ENCODE measurements at regions of chr1 and their contacts with region 1.

Region 1: DNA sequence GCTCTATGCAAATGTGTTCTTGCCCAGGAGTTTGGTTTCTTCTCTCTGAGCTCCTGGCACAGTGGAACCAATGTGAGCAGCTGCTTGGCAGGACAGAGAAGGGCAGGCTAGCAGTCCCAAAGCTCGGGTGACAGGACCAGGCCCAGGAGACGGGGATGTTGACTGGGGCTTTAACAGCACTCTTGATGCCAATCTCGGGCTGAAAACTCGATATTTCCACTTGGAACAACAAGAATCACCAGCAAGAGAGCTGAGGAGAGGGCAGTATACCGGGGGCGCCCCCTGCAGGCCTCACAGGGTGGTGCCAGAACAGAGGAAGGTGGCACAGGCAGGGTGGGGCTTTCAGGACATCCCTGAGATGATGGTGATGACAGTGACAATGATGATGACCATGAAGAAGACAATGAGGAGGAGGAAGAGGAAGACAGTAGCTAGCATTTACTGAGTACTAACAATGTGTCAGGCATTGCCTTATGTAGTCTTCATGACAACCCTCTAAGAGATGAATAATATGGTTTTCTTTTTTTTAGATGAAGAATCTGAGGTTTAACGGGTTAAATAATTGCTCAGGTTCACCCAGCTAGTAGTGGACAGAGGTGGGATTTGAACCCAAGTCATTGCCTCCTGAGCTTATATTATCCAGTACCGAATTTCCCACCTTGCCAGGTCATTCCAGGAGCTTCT is 2.7 kb upstream of the KCNJ9 start:
- DNase-seq: peak; percentile 78
- ATAC-seq: peak; percentile 93
- H3K4me3 Mint-ChIP-seq: no peak overlapping the region
- H3K27ac Mint-ChIP-seq: no peak overlapping the region
- H3K4me1 Mint-ChIP-seq: peaks cover 5% of the 10 kb centered on the region
- H3K27me3 Mint-ChIP-seq: peaks cover 49% of the 10 kb centered on the region

Region 2: DNA sequence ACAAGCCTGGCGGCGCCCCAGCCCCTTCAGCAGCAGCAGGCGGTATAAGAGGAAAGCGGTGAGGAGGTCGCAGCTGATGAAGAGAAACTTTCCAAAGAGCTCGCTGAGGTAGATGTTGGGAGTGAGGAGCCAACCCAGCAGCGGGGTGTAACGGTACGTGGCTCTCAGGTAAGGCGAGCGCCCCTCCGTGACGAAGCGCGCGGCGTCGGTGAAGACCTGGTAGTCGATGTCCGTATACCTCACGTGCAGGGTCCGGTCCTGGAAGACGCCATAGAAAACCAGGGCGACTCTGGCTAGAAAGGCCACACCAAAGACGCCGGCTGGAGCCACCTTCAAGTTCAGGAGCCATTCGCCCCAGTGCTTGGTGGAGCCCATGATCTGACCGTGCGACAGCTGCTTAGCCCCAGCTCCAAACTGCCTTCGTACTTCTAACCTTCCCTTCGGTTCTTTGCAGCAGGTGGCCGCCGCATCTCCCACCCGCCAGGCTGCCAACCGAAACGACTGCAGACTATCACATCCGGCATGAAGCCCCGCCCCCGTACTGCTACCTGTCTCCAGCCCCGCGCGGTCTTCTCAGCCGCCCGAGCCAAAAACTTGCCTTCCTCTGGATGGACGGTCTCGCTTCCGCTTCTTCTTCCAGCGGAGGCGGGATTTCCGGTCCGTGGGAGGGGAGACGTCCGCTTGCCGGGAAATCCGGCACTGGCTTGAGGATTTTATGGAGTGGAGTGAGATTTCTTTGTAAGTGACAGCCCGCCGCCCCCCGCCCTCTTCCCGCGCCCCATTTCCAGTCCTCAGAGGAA is 47.1 kb before region 1 on chr1 and contains the start of gene PIGM:
- CTCF ChIA-PET with region 1: interaction called, 40 read pairs
- POLR2A ChIA-PET with region 1: no interaction called
- DNase-seq: peak; percentile 97
- ATAC-seq: peak; percentile 99
- H3K4me3 Mint-ChIP-seq: peak within 1 kb of the TSS; percentile 95
- H3K27ac Mint-ChIP-seq: peak within 1 kb of the TSS; percentile 90
- H3K4me1 Mint-ChIP-seq: peaks cover 29% of the 10 kb centered on the region
- H3K27me3 Mint-ChIP-seq: peaks cover 12% of the 10 kb centered on the region
- total RNA-seq, gene PIGM: 4.2 to 4.5 TPM

Region 3: GRCh38 chr1:160093624-160094290 is 15.1 kb after region 1 on chr1:
- CTCF ChIA-PET with region 1: interaction called, 25 read pairs
- POLR2A ChIA-PET with region 1: interaction called, 5 read pairs
- DNase-seq: no peak
- ATAC-seq: no peak
- H3K4me3 Mint-ChIP-seq: no peak overlapping the region
- H3K27ac Mint-ChIP-seq: no peak overlapping the region
- H3K4me1 Mint-ChIP-seq: peaks cover 28% of the 10 kb centered on the region
- H3K27me3 Mint-ChIP-seq: no peaks in the 10 kb centered on the region

Region 4: GRCh38 chr1:160177231-160177630 is 98.6 kb after region 1 on chr1:
- CTCF ChIA-PET with region 1: no interaction called
- POLR2A ChIA-PET with region 1: no interaction called
- DNase-seq: no peak
- ATAC-seq: no peak
- H3K4me3 Mint-ChIP-seq: no peak overlapping the region
- H3K27ac Mint-ChIP-seq: no peak overlapping the region
- H3K4me1 Mint-ChIP-seq: no peaks in the 10 kb centered on the region
- H3K27me3 Mint-ChIP-seq: peaks cover 34% of the 10 kb centered on the region